ENCODE measurements at regions of chr14 and their contacts with region 1.

Region 1: DNA sequence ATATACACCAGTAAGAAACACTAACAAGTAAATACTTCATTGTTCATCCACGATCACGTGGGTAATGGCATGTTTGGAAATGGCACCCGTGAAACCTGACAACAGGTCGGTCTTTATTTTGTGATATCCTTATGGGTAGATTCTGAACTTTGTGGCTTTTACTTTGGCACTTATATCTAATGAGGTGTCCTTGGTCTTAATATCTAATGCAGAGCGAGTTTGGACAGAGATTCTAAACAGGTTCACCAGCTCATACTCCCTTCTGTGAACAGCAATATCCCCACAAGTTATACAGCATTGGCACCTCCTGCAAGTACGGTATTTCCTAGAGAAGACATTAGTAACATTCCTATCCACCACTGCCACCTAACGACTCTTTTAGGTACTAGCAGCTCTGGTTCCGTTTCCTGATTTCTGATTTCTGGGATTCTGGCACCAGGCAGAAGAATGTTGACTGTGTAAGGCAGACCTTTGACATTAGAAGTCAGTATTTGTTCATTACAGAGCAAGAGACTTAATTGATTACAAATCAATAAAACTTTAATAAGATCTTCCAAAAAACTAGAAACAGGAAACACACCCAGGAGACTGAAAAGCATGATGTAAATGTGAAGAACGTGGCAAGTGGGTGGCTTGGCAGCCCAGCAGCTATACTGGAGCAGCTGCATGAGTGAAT is 2.4 kb downstream of the ANG start:
- DNase-seq: peak in 33 of 42 donors; percentile 14 to 84 (median 63)

Region 2: GRCh38 chr14:20969341-20969740 is 278.4 kb after region 1 on chr14:
- intact Hi-C with region 1: loop called (anchors 10 kb)
- DNase-seq: no peak

Region 3: GRCh38 chr14:21103710-21104447 is 412.9 kb after region 1 on chr14:
- intact Hi-C with region 1: loop called (anchors 10 kb)
- DNase-seq: peak; percentile 93 to 99 (median 98)